Natural killer cell (primary cell): ENCODE measurements at regions of chr14 and their contacts with region 1.

Region 1: DNA sequence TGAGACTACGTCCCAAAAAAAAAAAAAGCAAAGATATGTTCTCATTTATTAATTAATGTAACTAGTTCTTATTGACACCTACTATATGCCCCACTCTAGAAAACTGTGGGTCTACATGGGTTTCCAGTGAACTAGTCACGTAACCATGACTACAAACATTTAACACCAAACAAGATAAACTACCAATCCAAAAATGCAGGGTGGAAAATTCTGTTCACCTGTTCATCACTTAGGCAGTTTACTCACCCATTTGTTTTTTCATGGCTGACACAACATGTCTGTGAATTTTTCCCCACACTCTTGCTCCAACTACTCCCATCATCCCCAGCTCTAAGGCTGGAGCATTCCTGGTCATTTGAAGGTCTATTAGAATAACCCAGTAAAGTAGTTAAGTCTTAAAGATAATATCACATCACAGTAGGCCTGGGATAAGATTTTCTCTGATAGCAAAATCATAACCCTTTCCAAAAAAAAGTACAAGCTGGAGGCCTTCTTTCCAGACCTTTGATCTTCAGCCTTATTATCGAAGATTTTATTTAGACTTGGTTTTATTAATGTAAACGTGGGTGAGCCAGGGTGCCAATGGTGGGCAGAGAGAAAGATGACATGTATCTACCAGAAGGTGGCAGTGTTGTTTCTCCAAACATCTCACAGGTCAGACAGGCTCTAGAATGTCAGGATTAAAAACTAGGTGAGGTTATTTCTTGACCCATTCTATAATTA is 61.6 kb upstream of the DAAM1 start:
- DNase-seq: peak in 1 of 2 donors; percentile 78
- ATAC-seq: peak; percentile 76 to 84 (median 78)
- H3K4me3 ChIP-seq: no peak overlapping the region
- H3K4me3 Mint-ChIP-seq: no peak overlapping the region
- H3K27ac ChIP-seq: no peak overlapping the region
- H3K27ac Mint-ChIP-seq: no peak overlapping the region
- H3K4me1 ChIP-seq: no peaks in the 10 kb centered on the region
- H3K4me1 Mint-ChIP-seq: no peaks in the 10 kb centered on the region
- H3K27me3 ChIP-seq: no peaks in the 10 kb centered on the region
- H3K27me3 Mint-ChIP-seq: peaks cover 7 to 17% of the 10 kb centered on the region in 2 donors
- CTCF ChIP-seq: peak; percentile 86

Region 2: DNA sequence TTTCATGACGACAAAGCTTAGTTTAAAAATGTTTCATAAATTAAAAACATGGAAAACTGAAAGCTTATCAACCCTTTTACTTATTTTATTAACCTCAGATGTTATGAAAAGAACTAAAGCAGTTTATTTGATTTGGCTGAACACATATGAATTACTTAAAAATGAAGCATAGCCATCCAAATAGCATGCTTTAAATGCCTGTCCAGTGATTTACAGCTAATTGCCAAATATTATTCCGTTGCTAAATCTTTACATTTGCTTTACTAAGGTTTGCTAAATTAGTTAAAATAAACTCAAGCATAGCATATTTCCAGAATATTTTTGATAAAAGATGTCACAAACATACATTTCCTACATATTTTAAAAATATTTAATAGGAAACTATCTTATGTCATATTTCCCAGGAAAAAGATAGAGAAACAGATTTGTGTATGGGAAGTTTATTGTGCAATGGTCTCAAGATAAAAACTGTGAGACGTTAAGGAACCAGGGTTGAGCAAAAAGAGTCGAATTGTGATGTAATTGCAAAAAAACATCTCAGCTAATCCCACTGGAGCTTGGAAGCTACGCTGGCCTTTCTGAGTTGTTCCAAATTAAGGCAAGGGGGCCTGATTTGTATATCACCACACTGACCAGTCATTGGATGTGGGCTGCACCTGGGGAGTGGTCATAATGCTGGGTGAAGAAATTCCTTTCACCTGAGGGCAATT is 312.5 kb after region 1 on chr14:
- intact Hi-C with region 1: loop called (anchors 1 kb)
- DNase-seq: no peak
- ATAC-seq: no peak
- H3K4me3 ChIP-seq: no peak overlapping the region
- H3K4me3 Mint-ChIP-seq: no peak overlapping the region
- H3K27ac ChIP-seq: no peak overlapping the region
- H3K27ac Mint-ChIP-seq: no peak overlapping the region
- H3K4me1 ChIP-seq: no peaks in the 10 kb centered on the region
- H3K4me1 Mint-ChIP-seq: no peaks in the 10 kb centered on the region
- H3K27me3 ChIP-seq: no peaks in the 10 kb centered on the region
- H3K27me3 Mint-ChIP-seq: no peaks in the 10 kb centered on the region
- CTCF ChIP-seq: no peak

Region 3: DNA sequence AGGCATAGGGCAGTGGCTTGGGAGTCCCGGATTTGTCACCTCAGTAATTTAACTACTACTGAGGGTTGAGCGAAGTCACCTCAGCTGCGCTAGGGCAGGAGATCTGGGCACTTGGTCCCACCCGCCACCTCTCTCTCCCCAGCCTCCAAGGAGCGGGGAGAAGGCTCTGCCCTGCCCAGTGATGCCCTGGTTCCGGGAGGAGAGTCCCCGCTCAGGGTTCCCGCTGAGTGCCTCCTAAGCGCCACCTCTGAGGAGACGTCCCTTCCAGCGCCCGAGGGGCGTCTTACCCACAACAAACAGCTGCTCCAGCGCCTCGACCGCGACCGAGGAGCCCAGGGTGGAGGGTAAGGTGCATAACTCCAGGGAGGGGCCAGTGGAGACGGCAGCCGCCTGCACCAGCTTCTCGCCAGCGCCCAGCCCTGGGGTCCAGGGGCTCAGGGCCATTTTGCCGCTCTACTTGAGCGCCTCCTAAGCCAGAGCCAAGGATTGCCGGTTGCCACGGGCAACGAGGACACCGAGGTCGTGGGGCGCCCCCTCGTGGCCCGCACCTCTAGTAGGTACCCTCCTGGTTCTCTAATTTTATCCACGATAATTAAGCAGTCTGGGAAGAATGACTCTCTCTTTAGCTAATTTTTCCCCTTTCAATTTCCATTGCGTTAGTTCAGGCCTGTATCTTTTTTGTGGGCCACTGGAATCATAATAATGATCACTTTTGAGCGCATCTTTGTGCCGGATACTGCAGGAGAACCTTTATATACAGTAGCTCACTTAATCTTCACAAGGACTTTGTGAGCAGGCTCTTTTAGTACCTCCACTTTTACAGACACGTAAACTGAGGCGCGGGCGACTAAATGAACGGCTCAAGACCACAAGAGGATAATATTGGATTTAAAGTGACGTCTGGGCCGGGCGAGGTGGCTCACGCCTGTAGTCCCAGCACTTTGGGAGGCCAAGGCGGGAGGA is 449.7 kb after region 1 on chr14 and contains the start of gene CCDC175:
- intact Hi-C with region 1: loop called (anchors 1 kb)
- DNase-seq: peak; percentile 71 to 91
- ATAC-seq: peak; percentile 93 to 98 (median 98)
- H3K4me3 ChIP-seq: peak within 1 kb of the TSS; percentile 41
- H3K4me3 Mint-ChIP-seq: peak within 1 kb of the TSS; percentile 70
- H3K27ac ChIP-seq: no peak within 1 kb of the TSS
- H3K27ac Mint-ChIP-seq: peak within 1 kb of the TSS in 1 of 2 donors; percentile 71
- H3K4me1 ChIP-seq: peaks cover 11% of the 10 kb centered on the region
- H3K4me1 Mint-ChIP-seq: peaks cover 11 to 13% of the 10 kb centered on the region in 2 donors
- H3K27me3 ChIP-seq: peaks cover 3% of the 10 kb centered on the region
- H3K27me3 Mint-ChIP-seq: peaks cover 7 to 19% of the 10 kb centered on the region in 2 donors
- CTCF ChIP-seq: peak; percentile 73
- total RNA-seq, gene CCDC175: not detected